Activated CD8-positive, alpha-beta memory T cell treated with anti-CD3 and anti-CD28 coated beads, Interleukin-2, amount 10 ng/mL, durations not matched to agents 7 days and 5 days (primary cell): ENCODE measurements at regions of chr22 and their contacts with region 1.

Region 1: DNA sequence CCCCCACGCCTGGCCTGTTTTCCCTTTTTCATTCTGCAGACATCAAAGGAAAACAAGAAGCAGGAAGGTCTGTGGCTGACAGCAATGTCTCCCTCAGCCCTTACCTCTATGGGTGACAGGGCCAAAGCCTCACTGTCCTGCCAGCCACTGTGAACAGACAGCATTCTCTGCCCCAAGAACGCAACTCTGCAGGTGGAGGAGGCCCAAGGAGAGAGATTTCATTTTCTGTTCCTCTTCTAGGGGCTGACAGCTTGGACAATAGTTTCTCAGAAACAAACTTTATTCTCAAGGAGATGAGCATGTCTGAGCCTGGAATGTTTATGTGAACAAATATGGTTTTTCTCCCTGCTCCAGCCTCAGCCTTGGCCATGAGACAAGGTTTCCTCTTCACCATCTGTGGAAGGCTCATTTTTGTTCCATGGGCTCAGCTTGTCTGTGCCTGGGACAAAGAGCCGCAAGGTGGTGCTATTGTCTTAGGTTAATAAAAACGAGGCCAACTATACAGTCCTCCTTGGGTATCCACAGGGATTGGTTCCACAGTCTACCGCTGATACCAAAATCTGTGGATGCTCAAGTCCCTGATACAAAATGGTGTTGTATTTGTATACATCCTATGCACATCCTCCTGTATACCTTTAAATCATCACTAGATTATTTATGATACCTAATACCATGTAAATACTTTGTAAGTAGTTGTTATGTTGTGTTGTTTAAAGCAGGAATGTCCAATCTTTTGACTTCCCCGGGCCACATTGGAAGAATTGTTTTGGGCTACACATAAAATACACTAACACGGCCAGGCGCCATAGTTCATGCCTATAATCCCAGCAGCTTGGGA is 5.8 kb downstream of the PIWIL3 start:
- DNase-seq: peak; percentile 62
- ATAC-seq: peak; percentile 65
- H3K4me3 Mint-ChIP-seq: no peak overlapping the region
- H3K27ac Mint-ChIP-seq: no peak overlapping the region
- H3K4me1 Mint-ChIP-seq: peaks cover 6% of the 10 kb centered on the region
- H3K27me3 Mint-ChIP-seq: peaks cover 34% of the 10 kb centered on the region

Region 2: GRCh38 chr22:24716602-24717001 is 52.2 kb before region 1 on chr22:
- CTCF ChIA-PET with region 1: no interaction called
- DNase-seq: no peak
- ATAC-seq: no peak
- H3K4me3 Mint-ChIP-seq: no peak overlapping the region
- H3K27ac Mint-ChIP-seq: no peak overlapping the region
- H3K4me1 Mint-ChIP-seq: no peaks in the 10 kb centered on the region
- H3K27me3 Mint-ChIP-seq: peaks cover 15% of the 10 kb centered on the region

Region 3: DNA sequence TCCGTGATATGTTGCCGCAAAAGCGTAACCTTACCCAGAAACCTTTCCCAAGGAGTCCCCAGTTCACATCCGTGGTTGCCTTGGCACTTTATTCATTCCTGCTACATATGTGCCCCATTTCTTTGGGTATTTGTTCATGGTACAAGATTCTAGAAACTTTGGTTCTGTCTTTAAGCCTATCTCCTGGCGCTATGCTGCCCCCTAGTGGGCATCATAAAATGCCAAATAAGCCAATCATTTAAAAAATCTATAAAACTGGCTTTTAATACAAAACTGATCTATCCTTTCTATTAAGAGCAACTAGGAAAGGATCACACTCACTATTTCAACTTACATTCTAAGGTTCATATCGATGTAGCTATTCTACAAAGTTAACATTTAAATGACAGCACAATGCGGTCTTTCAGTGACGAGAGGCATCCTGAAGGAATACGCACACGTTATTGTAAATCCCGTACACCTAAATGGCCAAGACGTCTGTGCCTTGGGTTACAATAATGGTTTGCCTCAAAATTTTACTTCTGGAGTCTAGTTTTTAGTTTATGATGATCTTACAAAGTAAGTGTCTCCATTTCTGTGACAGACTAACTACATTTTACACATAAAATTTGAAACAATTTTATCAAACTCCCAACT is 10.5 kb before region 1 on chr22:
- CTCF ChIA-PET with region 1: interaction called, 15 read pairs
- DNase-seq: peak; percentile 64
- ATAC-seq: no peak
- H3K4me3 Mint-ChIP-seq: no peak overlapping the region
- H3K27ac Mint-ChIP-seq: no peak overlapping the region
- H3K4me1 Mint-ChIP-seq: no peaks in the 10 kb centered on the region
- H3K27me3 Mint-ChIP-seq: peaks cover 27% of the 10 kb centered on the region

Region 4: DNA sequence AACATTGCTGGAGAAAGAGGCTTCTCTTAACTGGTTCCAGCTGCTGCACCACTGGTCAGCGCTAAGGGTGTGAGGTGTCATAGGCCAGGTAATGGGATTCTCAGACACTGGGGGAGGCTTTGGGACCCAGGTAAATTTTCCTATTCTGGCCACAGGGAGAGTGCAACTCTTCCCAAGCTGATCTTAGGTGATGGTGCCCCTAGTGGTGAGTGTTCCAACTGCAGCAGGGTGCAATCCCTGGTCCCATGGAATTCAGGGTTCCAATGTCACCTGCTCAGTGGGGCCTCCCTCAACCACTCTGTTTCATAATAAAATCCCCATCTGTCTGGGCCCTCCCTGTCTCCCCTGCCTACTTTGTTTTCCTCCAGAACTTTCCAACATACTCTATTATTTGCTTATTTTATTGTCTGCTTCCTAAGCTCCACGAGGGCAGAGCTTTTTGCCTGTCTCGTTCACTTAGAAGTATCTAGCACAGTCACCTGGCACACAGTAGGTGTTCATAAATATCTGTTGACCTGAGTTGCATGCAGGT is 34.3 kb after region 1 on chr22:
- CTCF ChIA-PET with region 1: interaction called, 13 read pairs
- DNase-seq: peak; percentile 55
- ATAC-seq: no peak
- H3K4me3 Mint-ChIP-seq: no peak overlapping the region
- H3K27ac Mint-ChIP-seq: no peak overlapping the region
- H3K4me1 Mint-ChIP-seq: peaks cover 22% of the 10 kb centered on the region
- H3K27me3 Mint-ChIP-seq: peaks cover 15% of the 10 kb centered on the region

Region 5: DNA sequence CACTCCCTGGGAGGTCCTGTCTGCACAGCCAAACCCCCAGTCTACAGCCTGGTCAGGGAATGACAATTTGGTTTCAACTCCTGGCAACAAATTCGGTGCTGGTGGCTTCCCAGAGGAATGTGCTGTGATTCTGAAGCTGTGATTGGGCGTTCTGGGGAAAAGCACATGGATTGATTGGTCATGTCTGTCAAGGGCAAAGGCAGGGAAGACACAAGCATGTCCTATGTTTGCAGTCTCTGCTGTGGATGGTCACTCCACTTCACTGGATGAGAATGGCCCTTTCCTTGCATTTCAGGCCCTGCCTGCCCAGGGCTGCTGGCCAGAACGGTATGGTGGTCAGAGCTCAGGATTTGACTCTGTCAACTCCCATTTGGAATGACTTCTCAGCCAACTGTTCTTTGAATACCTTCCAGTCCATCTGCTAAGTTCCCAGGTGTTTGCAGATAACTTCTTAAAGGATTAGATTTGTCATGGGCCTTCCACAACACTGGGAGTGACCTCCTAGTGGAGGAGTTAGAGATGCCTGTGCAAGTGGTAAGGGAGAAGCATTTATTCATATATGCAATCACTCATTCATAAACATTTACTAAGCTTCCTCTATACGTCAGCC is 79.9 kb after region 1 on chr22:
- CTCF ChIA-PET with region 1: interaction called, 64 read pairs
- DNase-seq: no peak
- ATAC-seq: no peak
- H3K4me3 Mint-ChIP-seq: no peak overlapping the region
- H3K27ac Mint-ChIP-seq: no peak overlapping the region
- H3K4me1 Mint-ChIP-seq: peaks cover 22% of the 10 kb centered on the region
- H3K27me3 Mint-ChIP-seq: peaks cover 10% of the 10 kb centered on the region